Left cardiac atrium (tissue), 4 donors: ENCODE measurements at regions of chr9 and their contacts with region 1.

Region 1: DNA sequence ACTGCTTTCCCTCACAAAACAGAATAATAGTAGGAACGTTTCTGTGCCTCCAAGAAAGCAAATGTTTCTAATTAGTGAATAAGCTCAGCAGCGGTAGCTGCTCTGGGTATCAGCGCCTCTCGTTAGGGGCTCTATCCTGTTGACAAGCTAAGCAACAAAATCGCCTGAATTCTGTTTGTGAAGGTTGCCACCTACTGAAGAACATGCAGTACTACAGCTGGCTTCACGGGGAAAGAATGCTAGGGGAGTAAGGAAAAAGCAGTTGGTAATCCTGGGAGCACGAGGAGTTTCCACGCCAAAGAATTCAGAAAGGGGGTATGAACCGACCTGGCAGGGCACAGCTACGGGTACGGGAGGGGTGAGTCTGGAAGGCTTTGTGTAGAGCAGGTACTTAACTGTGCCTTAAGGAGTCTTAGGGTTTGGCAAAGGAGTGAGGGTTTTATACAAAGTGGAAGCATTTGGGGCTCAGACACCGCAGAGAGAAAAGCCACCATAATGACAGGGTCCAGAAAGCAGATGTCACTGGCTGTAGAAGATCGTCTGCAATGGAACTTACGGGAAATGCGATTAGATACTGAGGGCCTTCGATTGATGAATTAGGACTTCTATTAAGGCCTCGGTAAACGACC is 171.7 kb downstream of the TTC39B start:
- DNase-seq: peak; percentile 36
- ATAC-seq: peak; percentile 86 to 90

Region 2: GRCh38 chr9:14978022-14979000 is 157.0 kb before region 1 on chr9:
- intact Hi-C with region 1: no loop called
- DNase-seq: no peak
- ATAC-seq: no peak

Region 3: DNA sequence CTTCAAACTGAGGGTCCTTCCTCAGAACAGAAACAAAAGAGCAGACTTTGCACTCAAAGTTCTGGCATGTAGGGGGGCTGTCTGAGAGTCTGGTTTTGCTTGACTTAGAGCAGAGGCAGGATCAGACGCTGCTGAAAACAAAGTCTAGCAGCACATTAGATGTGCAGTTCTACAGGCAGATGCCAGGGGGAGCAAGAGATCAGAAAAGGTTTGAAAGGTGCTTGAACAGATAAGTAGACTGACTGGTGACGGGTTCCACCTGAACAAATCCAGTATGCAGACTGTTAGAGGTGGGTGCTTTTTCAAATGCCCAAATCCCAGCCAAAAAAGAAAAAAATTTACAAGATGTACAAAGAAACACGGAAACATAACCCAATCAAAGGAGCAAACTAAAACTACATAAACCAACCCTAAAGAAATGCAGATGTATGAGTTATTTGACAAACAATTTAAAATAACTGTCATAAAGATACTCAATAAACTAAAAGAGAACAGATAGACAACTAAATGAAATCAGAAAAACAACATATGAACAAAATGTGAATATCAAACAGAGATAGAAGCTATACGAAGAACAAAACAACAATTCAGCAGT is 30.4 kb before region 1 on chr9:
- intact Hi-C with region 1: loop called (anchors 5 kb)
- DNase-seq: no peak
- ATAC-seq: peak in 1 of 2 donors; percentile 35

Region 4: GRCh38 chr9:15187589-15187988 is 52.3 kb after region 1 on chr9:
- intact Hi-C with region 1: loop called in 1 of 2 experiments (anchors 5 kb)
- DNase-seq: no peak
- ATAC-seq: no peak